Motor neuron (in vitro differentiated cells): ENCODE measurements at regions of chr10 and their contacts with region 1.

Region 1: GRCh38 chr10:23994479-23995046 is 214.4 kb upstream of the KIAA1217 start:
- ATAC-seq: peak in 4 of 8 experiments; percentile 33 to 76 (median 72)
- H3K4me3 ChIP-seq: no peak overlapping the region
- H3K27ac ChIP-seq: no peak overlapping the region
- H3K4me1 ChIP-seq: no peaks in the 10 kb centered on the region

Region 2: DNA sequence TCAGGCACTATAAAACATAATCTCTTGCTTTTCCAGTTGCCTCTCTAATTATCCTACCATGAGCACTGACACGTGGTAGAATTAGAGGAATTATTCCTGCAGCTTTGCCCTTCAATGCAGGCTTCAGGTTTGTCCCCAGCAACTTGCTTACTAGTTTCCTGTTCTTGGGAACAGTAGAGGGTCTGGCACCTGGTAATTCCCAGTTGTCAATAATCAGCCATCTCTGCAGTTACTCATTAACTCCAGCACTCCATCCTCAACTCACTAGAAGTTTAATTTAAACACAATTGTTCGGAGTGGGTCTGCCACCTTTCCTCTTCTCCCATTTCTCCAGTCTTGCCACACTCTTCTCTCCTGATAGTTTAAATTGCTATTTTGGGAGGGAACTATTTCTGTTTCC is 109.9 kb before region 1 on chr10:
- in situ Hi-C with region 1: no loop called
- ATAC-seq: no peak
- H3K4me3 ChIP-seq: no peak overlapping the region
- H3K27ac ChIP-seq: no peak overlapping the region
- H3K4me1 ChIP-seq: no peaks in the 10 kb centered on the region

Region 3: DNA sequence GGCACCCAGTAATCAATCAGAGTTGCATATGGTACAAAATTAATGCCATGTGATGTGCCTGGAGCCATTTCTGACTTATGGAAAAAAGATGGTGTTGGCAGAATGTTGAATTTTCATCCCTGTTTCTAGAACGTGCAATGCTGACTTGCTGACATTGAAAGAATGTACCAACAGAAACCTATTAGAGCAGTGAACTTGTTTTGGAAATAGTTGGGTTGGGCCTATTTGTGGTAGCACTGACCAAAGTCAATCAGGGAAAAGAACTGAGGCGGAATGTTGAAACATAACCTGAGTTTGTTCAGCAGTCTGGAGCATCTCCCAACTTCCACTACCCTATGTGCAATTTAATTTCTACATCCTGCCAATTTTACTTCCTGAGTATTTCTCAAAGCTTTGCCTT is 202.7 kb after region 1 on chr10:
- in situ Hi-C with region 1: loop called in 3 of 9 experiments (anchors 5 to 25 kb)
- ATAC-seq: no peak
- H3K4me3 ChIP-seq: no peak overlapping the region
- H3K27ac ChIP-seq: no peak overlapping the region
- H3K4me1 ChIP-seq: no peaks in the 10 kb centered on the region

Region 4: DNA sequence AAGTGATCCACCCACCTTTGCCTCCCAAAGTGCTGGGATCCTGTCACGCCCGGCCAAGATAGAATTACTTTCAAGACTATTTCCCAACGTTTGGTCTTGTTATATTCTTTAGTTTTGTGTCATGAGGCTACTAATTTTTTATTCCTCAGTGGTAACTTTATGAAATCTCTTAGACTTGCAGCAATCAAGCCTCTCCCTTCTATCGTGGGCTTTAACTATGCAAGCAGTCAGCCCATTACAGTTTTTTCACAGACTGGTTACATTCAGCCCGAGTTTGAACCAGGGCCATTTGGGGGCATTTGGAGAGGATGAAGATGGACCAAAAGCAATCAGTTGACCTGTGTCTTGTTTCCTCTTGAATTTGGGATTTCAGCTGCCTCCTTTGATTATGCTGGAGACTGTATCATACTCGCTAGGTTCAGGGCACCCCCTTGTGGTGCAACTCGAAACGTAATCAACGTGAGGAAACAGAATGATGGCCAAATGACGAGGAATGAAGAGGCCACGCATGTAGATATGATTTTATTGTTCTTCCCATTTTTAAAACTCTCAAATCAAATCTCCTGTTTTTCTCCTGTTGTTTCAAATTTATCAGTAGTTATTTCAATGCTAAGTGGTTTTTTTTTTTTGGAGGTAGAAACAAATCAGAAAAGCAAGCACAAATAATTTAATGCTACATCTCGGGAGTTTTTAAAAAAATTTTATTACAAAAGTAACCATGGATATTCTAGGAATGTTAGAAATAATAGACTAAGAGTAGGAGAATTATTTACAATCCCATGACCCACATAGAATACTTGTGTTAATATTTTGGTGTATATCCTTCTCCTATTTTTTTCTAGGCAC is 365.9 kb after region 1 on chr10:
- in situ Hi-C with region 1: loop called in 3 of 9 experiments (anchors 25 kb)
- ATAC-seq: peak; percentile 52 to 94 (median 70)
- H3K4me3 ChIP-seq: no peak overlapping the region
- H3K27ac ChIP-seq: no peak overlapping the region
- H3K4me1 ChIP-seq: peaks cover 0 to 2% of the 10 kb centered on the region in 2 donors

Region 5: GRCh38 chr10:24989867-24990266 is 995.3 kb after region 1 on chr10:
- in situ Hi-C with region 1: no loop called
- ATAC-seq: no peak
- H3K4me3 ChIP-seq: no peak overlapping the region
- H3K27ac ChIP-seq: no peak overlapping the region
- H3K4me1 ChIP-seq: peaks cover 5% of the 10 kb centered on the region in 2 donors